ENCODE measurements at regions of chr14 and their contacts with region 1.

Region 1: DNA sequence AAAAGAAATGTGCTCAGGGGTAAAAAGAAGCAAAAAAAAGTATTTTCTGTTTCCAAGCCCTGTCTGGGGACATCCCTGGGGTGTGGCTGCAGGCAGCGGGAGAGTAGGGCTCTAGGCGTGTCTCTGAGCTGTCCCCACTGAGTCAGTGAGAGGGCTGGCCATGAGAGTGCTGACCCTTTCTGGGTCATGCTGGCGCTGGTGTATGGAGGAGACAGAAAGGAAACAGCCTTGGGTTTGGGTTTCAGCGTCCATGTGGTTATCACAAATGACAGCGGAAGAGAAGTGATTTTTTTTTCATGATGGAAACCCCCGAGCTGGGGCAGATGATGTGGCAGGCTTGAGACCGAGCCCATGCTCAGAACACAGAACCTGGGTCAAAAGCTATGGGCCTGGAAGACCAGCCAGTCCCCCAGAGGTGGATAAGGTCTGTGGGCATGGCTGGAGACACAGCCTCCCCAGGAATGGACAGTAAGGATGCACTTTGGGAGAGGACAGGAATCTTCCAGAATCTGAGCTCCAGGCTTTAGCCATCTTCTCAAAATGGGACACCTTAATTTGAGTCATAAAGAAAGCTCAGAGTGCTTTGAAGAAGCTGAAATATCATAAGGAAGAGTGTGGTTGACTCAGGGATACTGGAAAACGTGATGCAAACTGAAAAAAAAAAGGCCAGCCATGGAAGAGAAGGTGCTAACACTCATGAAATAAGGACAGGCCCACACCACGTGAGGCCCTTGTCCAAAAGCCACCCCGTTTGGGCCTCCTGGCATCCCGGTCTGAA is 36.2 kb downstream of the SYNE3 start:
- DNase-seq: peak in 2 of 3 donors; percentile 83 to 84
- H3K4me3 ChIP-seq: no peak overlapping the region
- H3K27ac ChIP-seq: no peak overlapping the region
- H3K4me1 ChIP-seq: peaks cover 0 to 8% (median 3%) of the 10 kb centered on the region in 4 experiments
- H3K27me3 ChIP-seq: no peaks in the 10 kb centered on the region

Region 2: DNA sequence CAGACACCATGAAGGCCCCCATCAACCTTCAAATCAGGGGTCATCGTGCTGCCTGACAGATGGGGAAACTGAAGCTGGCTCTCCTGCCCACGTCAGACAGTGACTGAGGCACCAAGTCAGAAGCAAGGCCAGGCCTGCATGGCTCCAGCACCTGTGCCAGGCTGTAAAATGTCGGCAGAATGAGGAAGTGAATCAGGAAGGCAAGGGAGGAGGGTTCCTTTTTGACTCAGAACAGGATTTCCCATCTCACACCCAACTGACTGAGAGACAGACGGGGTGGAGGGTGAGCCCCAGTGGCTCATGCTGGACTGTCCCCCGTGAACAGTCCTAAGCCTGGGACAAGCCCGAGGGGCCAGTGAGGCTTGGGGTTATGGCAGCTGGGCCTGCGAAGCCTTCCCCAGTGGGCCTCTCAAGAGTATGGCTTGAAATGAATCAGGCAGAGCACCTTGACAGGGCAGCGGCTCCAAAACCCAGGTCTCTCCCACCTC is 15.3 kb after region 1 on chr14:
- CTCF ChIA-PET with region 1: interaction called, 13 read pairs
- POLR2A ChIA-PET with region 1: no interaction called
- DNase-seq: peak; percentile 62 to 87 (median 74)
- H3K4me3 ChIP-seq: peak overlapping the region in 2 of 7 experiments; percentile 13 to 21
- H3K27ac ChIP-seq: peak overlapping the region in 1 of 2 experiments; percentile 68
- H3K4me1 ChIP-seq: peaks cover 7 to 36% (median 31%) of the 10 kb centered on the region in 4 experiments
- H3K27me3 ChIP-seq: no peaks in the 10 kb centered on the region

Measured in common myeloid progenitor, CD34-positive (primary cell).